Colonic mucosa (tissue), 4 donors: ENCODE measurements at regions of chr5 and their contacts with region 1.

Region 1: DNA sequence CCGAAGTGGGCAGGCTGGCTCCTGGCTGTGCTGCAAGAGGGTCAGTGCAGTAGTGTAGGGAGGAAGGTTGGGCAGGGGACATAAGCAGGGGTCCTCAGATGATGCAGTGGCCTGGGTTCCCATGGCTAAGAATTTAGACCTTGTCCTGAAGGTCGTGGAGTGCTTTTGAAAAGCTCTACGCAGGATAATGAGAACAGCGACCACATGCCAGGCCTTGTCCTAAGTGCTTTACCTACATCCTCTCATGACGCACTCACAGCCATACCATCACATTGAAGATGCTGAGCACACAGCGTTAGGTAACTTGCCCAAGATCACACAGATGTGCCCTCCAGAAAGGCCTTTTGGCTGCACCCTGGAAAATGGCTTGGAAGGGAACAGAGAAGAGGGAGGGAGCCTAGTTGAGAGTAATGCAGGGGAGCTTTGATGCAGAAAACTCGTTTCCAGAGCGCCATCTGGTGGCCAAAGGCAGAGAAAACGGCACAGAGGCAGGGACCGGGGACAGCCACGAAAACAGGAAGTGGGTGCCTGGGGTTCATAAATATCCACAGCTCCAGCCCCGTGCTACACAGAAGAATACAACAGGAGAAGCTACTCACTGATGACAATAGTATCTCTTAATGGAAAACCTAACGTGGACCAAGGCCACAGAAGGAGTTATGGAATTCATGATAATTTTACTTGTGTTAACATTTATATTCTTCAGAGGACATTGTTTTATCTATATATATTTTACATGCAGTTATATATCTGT is 2.6 kb upstream of the PCDH12 start:
- DNase-seq: peak; percentile 94
- H3K4me3 ChIP-seq: no peak overlapping the region
- H3K27ac ChIP-seq: no peak overlapping the region
- H3K4me1 ChIP-seq: no peaks in the 10 kb centered on the region
- H3K27me3 ChIP-seq: no peaks in the 10 kb centered on the region
- CTCF ChIP-seq: peak; percentile 87

Region 2: DNA sequence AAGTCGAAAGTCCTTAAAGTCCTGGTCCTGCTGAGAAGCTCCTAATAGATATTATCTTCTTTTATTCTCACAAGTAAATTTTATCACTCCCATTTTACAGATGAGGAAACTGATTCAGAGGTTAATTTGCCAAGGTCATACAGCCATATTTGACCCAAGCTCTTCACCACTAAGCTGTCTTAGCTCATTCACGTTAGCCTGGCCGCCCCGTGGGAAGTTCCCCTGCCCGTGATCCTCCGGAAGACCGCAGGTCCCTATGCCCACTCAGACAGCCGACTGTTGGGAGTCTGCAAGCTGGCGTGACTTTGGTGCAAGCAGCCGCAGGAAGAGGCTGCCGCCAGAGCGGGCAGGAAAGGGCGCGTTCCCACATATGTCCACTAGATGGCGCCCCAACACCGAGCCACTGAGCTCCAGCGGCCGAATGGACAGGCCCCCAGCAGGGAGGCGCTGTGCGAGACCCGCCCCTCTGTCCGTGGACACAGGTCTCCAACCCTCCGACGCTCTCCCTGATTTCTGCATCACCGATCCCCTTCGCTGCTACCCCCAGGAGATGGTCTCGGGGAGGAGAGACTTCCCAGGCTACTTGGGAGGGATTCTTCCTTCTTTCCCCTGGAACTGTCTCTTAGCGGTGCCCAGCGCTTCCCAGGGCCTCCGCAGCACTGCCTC is 268.6 kb before region 1 on chr5:
- intact Hi-C with region 1: loop called (anchors 2 kb)
- DNase-seq: peak; percentile 90
- H3K4me3 ChIP-seq: peak overlapping the region; percentile 24
- H3K27ac ChIP-seq: no peak overlapping the region
- H3K4me1 ChIP-seq: no peaks in the 10 kb centered on the region
- H3K27me3 ChIP-seq: no peaks in the 10 kb centered on the region
- CTCF ChIP-seq: peak; percentile 99

Region 3: DNA sequence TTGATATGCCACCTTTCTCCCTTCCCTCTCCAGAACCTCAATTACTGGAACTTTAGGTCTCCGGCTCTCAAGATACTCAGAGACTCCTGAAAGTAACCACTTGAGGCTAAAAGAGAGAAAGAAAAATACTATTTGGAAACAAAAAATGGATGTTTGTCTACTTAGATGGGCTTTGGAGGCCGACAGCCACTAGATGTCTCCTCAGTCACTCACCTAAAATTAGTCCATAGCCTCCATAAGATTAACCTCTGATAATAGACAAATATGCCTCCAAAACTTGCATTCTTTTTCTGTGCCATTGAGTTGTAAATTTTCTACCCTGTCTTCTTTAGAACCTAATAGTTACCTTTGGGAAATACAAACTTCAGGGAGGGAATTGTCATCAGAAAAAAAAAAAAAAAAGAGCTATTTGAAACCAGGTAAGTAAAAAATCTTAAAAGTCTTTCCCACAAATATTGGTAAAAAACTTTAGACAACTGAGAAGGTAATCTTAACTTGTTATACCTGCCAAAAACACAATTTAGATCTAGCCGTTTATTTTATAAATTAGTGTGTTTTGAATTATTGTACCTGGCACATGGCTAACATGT is 71.2 kb before region 1 on chr5:
- intact Hi-C with region 1: loop called (anchors 2 kb)
- DNase-seq: no peak
- H3K4me3 ChIP-seq: no peak overlapping the region
- H3K27ac ChIP-seq: no peak overlapping the region
- H3K4me1 ChIP-seq: no peaks in the 10 kb centered on the region
- H3K27me3 ChIP-seq: no peaks in the 10 kb centered on the region
- CTCF ChIP-seq: no peak

Region 4: GRCh38 chr5:141903261-141903660 is 57.4 kb before region 1 on chr5:
- intact Hi-C with region 1: no loop called
- DNase-seq: no peak
- H3K4me3 ChIP-seq: no peak overlapping the region
- H3K27ac ChIP-seq: no peak overlapping the region
- H3K4me1 ChIP-seq: no peaks in the 10 kb centered on the region
- H3K27me3 ChIP-seq: no peaks in the 10 kb centered on the region
- CTCF ChIP-seq: no peak

Region 5: DNA sequence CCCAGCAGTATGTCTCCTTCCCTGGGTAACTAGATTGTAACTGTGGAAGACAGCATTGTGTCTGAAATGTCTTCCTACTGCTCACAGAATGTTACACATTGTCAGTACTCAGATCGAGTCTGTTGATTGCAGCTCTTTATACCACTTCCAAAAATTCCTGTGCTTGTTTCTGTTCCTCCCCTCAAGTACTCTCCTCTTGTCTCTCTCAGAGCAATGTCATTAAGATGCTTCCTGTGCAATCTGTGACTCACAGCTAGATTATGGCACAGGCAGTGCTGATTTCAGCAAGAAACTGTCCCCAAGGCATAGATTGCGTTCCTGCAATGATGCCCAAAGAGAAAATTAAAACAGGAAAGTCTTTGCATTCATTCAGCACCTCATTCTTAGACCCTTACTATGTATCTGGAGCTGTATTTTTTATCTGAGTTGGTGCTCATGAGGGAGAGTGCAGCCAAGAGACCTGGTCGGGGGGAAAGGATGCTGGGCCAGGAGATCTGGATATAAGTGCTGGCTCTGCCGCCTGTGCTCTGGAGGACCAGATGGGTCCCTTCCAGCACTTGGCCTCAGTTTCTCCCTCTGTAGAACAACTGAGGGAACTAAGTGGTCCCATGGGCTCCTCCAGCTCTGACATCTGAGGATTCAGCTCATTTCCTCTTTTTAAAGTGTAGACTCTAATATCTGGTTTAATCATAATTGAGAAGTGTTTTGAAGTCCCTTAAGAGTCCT is 93.0 kb after region 1 on chr5:
- intact Hi-C with region 1: no loop called
- DNase-seq: no peak
- H3K4me3 ChIP-seq: no peak overlapping the region
- H3K27ac ChIP-seq: no peak overlapping the region
- H3K4me1 ChIP-seq: no peaks in the 10 kb centered on the region
- H3K27me3 ChIP-seq: no peaks in the 10 kb centered on the region
- CTCF ChIP-seq: no peak

Region 6: DNA sequence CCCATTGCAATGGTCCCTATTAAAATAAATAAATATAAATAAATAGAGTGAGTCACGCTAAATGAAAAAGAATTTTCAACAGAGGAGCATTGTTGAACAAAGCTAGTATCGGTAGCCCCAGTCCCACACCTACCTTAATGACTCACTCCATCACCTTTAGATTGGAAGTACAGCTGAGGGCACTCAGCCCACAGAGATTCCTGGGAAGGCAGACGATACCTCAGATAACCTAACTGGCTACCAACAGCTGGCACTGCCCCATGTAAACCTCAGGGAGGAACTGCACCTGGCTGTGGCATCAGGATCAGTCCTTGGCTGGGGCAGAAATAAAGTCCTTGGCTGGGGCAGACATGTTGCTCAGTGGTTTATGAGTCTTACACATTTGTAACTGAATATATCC is 314.9 kb after region 1 on chr5:
- intact Hi-C with region 1: no loop called
- DNase-seq: no peak
- H3K4me3 ChIP-seq: no peak overlapping the region
- H3K27ac ChIP-seq: no peak overlapping the region
- H3K4me1 ChIP-seq: no peaks in the 10 kb centered on the region
- H3K27me3 ChIP-seq: no peaks in the 10 kb centered on the region
- CTCF ChIP-seq: no peak